A673 (cell line): ENCODE measurements at regions of chr2 and their contacts with region 1.

Region 1: DNA sequence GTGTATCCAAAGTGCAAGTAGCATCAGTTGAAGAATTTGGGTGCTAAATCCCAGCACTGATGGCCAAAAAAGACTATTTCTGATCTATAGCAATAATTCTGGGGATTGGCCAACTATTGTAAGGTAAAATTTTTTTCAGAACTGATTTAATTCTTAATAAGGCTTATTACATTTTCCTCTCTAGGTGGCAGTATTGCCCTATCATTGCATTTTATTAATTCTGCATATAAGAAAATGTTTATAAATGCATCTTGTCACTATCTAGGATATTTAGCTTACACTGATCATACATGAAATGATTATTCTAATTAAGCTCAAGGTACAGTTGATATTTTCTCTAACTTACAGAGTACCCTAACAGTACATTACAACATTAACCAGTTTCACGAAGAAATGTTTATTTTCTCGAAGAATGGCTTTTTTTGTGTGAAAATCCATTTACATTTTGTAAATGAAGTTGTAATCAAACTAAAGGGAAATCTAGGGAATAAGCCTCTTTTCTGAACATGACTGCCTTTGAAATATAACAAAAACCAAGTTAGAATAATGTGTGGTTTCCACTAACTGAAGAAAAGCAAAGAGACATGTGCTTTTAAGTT is 11.0 kb downstream of the TTN start:
- DNase-seq: peak; percentile 41
- H3K4me3 ChIP-seq: no peak overlapping the region
- H3K27ac ChIP-seq: no peak overlapping the region
- H3K4me1 ChIP-seq: no peaks in the 10 kb centered on the region
- H3K27me3 ChIP-seq: peaks cover 11% of the 10 kb centered on the region
- CTCF ChIP-seq: peak; percentile 68

Region 2: GRCh38 chr2:178914259-178914849 is 118.2 kb after region 1 on chr2:
- CTCF ChIA-PET with region 1: no interaction called
- POLR2A ChIA-PET with region 1: no interaction called
- intact Hi-C with region 1: loop called (anchors 1 kb)
- DNase-seq: peak; percentile 75
- H3K4me3 ChIP-seq: no peak overlapping the region
- H3K27ac ChIP-seq: no peak overlapping the region
- H3K4me1 ChIP-seq: no peaks in the 10 kb centered on the region
- H3K27me3 ChIP-seq: peaks cover 18% of the 10 kb centered on the region
- CTCF ChIP-seq: peak; percentile 91

Region 3: DNA sequence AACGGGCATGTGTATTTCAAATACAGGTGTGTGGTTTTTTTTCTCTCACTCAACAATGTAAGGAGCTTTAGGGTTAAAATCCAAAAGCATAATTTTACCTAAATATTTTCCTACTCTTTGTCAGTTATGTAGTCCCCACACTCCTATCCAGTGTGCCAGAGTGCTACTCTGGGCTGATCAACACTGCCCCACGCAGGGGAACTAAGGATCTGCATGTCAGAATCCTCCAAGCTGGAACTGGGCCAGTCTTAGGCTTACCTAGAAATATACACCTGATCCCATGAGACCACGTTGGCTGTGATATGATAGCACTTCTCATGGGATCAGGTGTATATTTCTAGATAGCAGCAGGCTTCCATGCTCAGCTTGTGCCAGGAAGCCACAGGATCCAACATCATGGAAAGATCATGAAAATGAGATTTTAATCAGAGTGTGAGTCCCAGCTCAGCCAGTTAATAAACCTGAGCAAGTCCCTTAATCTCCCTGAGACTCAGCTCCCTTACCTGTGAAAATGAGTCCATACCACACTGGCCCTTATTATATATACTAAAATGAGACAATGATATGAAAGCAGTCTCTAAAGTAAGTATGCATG is 224.1 kb after region 1 on chr2:
- CTCF ChIA-PET with region 1: no interaction called
- POLR2A ChIA-PET with region 1: no interaction called
- intact Hi-C with region 1: loop called (anchors 2 kb)
- DNase-seq: peak; percentile 30
- H3K4me3 ChIP-seq: no peak overlapping the region
- H3K27ac ChIP-seq: no peak overlapping the region
- H3K4me1 ChIP-seq: no peaks in the 10 kb centered on the region
- H3K27me3 ChIP-seq: peaks cover 4% of the 10 kb centered on the region
- CTCF ChIP-seq: peak; percentile 70

Region 4: DNA sequence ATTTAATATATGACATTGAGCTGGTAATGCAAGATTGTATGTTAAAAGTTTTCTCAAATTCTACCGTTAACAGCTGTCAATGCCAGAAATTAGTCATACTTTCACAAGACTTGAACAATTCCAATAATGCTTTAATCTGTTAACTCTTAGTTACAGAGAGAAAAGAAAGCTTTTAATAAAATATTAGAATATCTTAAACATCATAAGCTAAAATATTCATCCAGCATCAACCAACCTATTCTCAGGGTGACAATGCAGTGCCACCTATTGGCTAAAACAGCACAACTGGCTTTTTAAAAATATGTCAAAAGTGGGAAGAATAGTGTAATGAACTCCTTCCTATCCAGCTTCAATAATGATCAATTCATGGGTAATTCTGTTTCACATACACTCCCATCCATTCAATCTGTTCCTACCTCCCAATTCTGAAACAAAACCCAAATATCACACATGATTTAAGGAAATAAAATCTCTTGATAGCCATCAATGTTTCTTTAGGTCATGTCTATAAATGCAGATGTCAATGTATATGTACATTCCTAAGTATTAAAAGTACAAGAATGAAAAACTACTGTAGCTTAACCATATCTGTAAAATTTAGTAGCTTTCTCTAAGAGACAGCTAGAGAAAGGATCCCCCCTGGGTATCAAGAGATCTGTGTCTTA is 333.5 kb after region 1 on chr2:
- CTCF ChIA-PET with region 1: no interaction called
- POLR2A ChIA-PET with region 1: no interaction called
- intact Hi-C with region 1: loop called (anchors 2 kb)
- DNase-seq: no peak
- H3K4me3 ChIP-seq: no peak overlapping the region
- H3K27ac ChIP-seq: no peak overlapping the region
- H3K4me1 ChIP-seq: no peaks in the 10 kb centered on the region
- H3K27me3 ChIP-seq: no peaks in the 10 kb centered on the region
- CTCF ChIP-seq: peak; percentile 74

Region 5: GRCh38 chr2:179440642-179441251 is 644.6 kb after region 1 on chr2:
- CTCF ChIA-PET with region 1: no interaction called
- POLR2A ChIA-PET with region 1: no interaction called
- intact Hi-C with region 1: loop called (anchors 10 kb)
- DNase-seq: peak; percentile 59
- H3K4me3 ChIP-seq: no peak overlapping the region
- H3K27ac ChIP-seq: no peak overlapping the region
- H3K4me1 ChIP-seq: no peaks in the 10 kb centered on the region
- H3K27me3 ChIP-seq: no peaks in the 10 kb centered on the region
- CTCF ChIP-seq: peak; percentile 77